ENCODE measurements at regions of chr11 and their contacts with region 1.

Region 1: GRCh38 chr11:72080256-72080974 is at the starts of genes LRRC51 and NUMA1:
- DNase-seq: peak; percentile 99
- H3K4me3 Mint-ChIP-seq: peak within 1 kb of the TSS; percentile 90
- H3K27ac Mint-ChIP-seq: peak within 1 kb of the TSS; percentile 92
- H3K4me1 Mint-ChIP-seq: peaks cover 40% of the 10 kb centered on the region
- H3K27me3 Mint-ChIP-seq: no peaks in the 10 kb centered on the region
- total RNA-seq, gene LRRC51: 7.9 and 9.2 TPM in 2 replicates
- total RNA-seq, gene NUMA1: 162 and 174 TPM in 2 replicates

Region 2: GRCh38 chr11:71787098-71787823 is 293.2 kb before region 1 on chr11:
- intact Hi-C with region 1: loop called (anchors 2 kb)
- DNase-seq: peak; percentile 91
- H3K4me3 Mint-ChIP-seq: peak overlapping the region; percentile 95
- H3K27ac Mint-ChIP-seq: peak overlapping the region; percentile 97
- H3K4me1 Mint-ChIP-seq: peaks cover 21% of the 10 kb centered on the region
- H3K27me3 Mint-ChIP-seq: no peaks in the 10 kb centered on the region

Region 3: GRCh38 chr11:72040726-72041441 is 39.5 kb before region 1 on chr11:
- intact Hi-C with region 1: loop called (anchors 1 kb)
- DNase-seq: peak; percentile 50
- H3K4me3 Mint-ChIP-seq: no peak overlapping the region
- H3K27ac Mint-ChIP-seq: no peak overlapping the region
- H3K4me1 Mint-ChIP-seq: peaks cover 31% of the 10 kb centered on the region
- H3K27me3 Mint-ChIP-seq: no peaks in the 10 kb centered on the region

Region 4: DNA sequence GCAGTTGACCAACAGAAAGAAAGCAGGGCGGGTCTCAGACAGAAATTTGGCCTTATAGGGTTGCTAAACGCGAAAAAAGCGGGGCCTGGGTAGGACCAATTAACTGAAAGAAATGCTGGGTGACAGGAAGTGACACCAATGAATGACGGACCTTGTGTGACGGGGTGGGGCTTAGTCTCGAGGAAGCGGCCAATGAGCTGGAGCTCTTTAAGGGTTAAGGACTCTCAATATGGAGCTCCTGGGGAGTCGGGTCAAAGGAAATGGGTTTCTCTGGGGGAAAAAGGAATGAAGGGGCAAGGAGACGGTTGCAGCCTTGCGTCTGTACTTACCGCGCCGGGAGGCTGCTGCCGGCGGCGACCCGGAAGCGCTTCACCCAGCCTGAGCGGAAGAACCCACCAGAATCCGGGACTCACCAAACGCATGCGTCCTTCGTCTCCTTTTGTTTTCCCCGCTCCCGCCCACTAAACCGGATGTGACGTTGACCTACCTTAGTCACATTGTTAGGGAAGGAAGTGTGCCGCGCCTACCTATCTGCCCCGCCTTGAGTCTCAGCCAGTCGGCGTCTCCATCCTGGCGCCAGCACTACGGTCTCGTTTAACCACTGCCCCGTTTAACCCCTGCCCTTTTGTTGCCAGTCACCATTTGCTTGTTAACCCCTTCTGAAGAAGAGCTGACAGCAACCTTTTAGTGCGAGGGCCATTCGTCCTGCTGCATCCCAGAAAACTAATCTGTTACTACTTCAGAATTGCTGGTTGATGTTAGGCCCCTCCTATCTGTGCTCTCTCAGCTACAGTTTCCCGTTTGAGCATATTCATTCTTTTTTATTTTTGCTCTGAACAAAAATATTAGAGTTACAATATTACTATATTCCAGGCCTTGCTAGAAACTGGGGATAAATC is 32.2 kb after region 1 on chr11 and contains the start of gene ANAPC15:
- intact Hi-C with region 1: loop called (anchors 1 kb)
- DNase-seq: peak; percentile 98
- H3K4me3 Mint-ChIP-seq: peak within 1 kb of the TSS; percentile 89
- H3K27ac Mint-ChIP-seq: peak within 1 kb of the TSS; percentile 98
- H3K4me1 Mint-ChIP-seq: peaks cover 16% of the 10 kb centered on the region
- H3K27me3 Mint-ChIP-seq: no peaks in the 10 kb centered on the region
- total RNA-seq, gene ANAPC15: 61.6 and 67.9 TPM in 2 replicates

Region 5: DNA sequence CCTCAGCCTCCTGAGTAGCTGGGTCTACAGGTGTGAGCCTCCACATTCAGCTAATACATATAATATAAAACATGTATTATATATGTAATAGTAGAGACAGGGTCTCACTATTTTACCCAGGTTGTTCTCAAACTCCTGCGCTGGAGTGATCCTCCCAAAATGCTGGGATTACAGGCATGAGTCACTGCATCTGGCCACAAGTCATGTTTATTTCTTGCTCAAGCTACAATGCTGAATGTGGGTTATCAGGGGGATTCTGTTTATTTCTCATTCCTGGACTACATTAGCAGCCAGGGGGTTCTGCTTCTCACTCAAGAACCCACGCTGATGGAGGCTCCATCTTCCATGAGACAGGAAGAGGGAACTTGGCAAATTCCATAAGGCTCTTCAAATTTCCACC is 79.9 kb after region 1 on chr11:
- intact Hi-C with region 1: no loop called
- DNase-seq: no peak
- H3K4me3 Mint-ChIP-seq: no peak overlapping the region
- H3K27ac Mint-ChIP-seq: no peak overlapping the region
- H3K4me1 Mint-ChIP-seq: no peaks in the 10 kb centered on the region
- H3K27me3 Mint-ChIP-seq: peaks cover 23% of the 10 kb centered on the region

Region 6: DNA sequence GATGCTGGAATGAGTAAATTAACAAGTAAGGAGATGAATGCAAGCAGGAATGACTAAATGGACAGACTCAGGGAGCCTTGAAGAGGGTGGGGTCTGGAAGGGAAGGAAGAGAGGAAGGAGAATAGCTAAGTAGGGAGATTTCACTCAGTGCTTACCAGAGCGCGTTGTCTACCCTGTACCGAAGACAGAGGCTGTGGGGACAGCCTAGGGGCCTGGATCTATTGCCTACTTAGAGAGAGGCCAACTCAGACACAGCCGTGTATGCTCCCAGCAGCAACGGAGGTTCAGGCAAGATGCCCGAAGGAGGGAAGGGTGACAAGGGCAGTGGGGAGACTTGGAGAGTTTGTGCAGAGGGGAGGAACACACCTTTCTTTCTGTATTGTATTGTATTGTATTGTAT is 136.2 kb after region 1 on chr11 and contains the start of gene FOLR2:
- intact Hi-C with region 1: no loop called
- DNase-seq: no peak
- H3K4me3 Mint-ChIP-seq: no peak within 1 kb of the TSS
- H3K27ac Mint-ChIP-seq: no peak within 1 kb of the TSS
- H3K4me1 Mint-ChIP-seq: peaks cover 17% of the 10 kb centered on the region
- H3K27me3 Mint-ChIP-seq: peaks cover 38% of the 10 kb centered on the region
- total RNA-seq, gene FOLR2: not detected in 2 replicates

Region 7: DNA sequence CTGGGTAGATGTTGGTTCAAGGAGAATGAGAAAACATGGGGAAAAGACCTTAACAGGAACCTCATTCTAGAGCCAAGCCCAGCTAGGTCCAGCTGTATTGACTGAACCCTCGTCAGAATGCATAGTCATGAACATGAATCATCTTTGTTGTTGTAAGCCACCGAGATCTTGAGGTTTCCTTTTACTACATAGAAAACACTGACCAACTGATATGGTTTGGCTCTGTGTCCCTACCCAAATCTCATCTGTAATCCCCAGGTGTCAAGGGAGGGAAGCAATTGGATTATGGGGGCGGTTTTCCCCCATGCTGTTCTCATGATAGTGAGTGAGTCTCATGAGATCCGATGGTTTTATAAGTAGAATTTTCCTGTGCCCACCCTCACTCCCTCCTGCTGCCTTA is 182.9 kb after region 1 on chr11:
- intact Hi-C with region 1: no loop called
- DNase-seq: no peak
- H3K4me3 Mint-ChIP-seq: no peak overlapping the region
- H3K27ac Mint-ChIP-seq: no peak overlapping the region
- H3K4me1 Mint-ChIP-seq: peaks cover 18% of the 10 kb centered on the region
- H3K27me3 Mint-ChIP-seq: peaks cover 10% of the 10 kb centered on the region

Region 8: GRCh38 chr11:72430741-72431570 is 350.5 kb after region 1 on chr11:
- intact Hi-C with region 1: loop called (anchors 1 kb)
- DNase-seq: peak; percentile 35
- H3K4me3 Mint-ChIP-seq: peak overlapping the region; percentile 39
- H3K27ac Mint-ChIP-seq: no peak overlapping the region
- H3K4me1 Mint-ChIP-seq: peaks cover 33% of the 10 kb centered on the region
- H3K27me3 Mint-ChIP-seq: no peaks in the 10 kb centered on the region

Measured in activated T-helper 2 cell treated with anti-CD3 and anti-CD28 coated beads, Interferon-gamma antibody, Interleukin-2, Interleukin-4, amounts not matched to agents 10 μg/mL and 5 μg/mL and 100 μg/mL, durations not matched to agents 14 hours and 24 hours and 36 hours (primary cell).